Dendritic cell treated with granulocyte-macrophage colony-stimulating factor and Interleukin-4, amounts not matched to agents 40 ng/mL and 50 ng/mL, for 4 days (primary cell): ENCODE measurements at regions of chr19 and their contacts with region 1.

Region 1: DNA sequence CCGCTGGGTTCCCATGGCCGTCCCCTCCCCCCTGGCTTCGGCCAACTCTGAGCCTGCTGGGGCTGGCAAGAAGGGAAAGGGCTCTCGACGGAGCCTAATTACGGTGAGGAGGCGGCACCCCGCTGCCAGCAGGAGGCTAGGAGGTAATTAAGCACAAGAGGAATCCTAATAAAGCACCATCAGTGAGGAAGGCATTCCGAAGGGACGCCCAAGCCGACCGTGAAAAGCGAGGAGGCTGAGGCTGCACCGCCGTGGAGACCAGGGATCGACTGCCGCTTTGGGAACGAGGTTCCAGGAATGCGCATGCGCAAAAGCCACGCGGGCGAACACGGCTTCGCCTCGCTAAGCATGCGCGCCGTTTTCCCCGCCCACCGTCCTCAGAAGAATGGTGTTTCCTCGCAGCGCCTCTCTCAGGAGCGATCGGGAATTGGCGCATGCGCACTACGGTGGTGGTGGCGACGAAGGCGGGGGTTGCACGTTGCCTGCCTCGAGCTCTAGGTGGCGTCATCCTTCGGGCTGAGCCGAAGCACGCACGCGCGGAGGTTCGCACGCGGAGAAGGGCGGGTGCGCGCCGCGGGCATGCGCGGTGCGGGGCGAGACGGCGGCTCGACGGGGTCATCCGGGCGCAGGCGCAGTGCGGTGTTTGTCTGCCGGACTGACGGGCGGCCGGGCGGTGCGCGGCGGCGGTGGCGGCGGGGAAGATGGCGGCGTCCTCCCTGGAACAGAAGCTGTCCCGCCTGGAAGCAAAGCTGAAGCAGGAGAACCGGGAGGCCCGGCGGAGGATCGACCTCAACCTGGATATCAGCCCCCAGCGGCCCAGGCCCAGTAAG is at the start of gene MAP2K7:
- H3K4me3 Mint-ChIP-seq: peak within 1 kb of the TSS; percentile 90
- H3K27ac Mint-ChIP-seq: peak within 1 kb of the TSS; percentile 86
- H3K4me1 Mint-ChIP-seq: peaks cover 45% of the 10 kb centered on the region
- H3K27me3 Mint-ChIP-seq: peaks cover 15% of the 10 kb centered on the region

Region 2: DNA sequence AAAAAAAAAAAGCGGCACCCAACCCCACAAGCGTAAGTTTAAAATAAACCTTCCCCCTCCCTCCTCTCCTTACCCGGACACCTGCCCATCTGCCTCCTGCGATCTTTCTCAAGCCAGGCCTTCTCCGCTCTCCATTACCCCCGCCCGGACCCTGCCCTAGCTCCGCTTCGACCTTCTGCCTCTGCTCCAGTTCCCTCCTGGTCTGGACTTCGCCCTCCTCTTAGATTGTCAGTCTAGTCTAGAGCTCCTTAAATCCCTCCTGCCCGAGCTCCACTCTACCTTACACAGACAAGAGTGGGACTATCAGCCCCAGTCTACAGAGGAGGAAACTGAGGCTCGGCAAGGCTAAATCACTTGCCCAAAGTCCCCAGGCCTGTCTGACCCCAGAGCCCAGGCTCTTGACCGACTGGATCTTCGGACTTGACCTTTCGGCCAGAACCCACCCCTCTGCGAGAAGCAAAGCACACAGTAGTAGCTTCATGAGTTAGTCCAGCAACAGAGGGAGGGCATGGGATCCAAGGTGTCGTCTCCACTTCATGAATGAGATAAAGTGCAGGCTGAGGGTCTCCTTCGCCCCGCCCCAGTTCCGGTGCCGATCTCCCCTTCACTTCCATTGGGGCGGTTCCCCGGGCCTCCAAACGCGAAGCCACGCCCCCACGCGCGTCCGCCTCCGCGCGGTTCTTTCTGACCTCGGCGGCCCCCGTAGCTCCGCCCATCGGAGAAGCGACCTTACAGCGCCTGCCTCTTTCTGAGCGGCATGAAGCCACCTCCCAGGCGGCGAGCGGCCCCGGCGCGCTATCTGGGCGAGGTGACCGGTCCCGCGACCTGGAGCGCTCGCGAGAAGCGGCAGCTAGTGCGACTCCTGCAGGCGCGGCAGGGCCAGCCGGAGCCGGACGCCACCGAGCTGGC is 16.4 kb after region 1 on chr19 and contains the start of gene SNAPC2:
- intact Hi-C with region 1: loop called (anchors 2 kb)
- H3K4me3 Mint-ChIP-seq: peak within 1 kb of the TSS; percentile 87
- H3K27ac Mint-ChIP-seq: peak within 1 kb of the TSS; percentile 94
- H3K4me1 Mint-ChIP-seq: peaks cover 82% of the 10 kb centered on the region
- H3K27me3 Mint-ChIP-seq: peaks cover 66% of the 10 kb centered on the region